Activated B cell treated with CpG ODN at 0.5 μM for 24 hours (primary cell): ENCODE measurements at regions of chr5 and their contacts with region 1.

Region 1: DNA sequence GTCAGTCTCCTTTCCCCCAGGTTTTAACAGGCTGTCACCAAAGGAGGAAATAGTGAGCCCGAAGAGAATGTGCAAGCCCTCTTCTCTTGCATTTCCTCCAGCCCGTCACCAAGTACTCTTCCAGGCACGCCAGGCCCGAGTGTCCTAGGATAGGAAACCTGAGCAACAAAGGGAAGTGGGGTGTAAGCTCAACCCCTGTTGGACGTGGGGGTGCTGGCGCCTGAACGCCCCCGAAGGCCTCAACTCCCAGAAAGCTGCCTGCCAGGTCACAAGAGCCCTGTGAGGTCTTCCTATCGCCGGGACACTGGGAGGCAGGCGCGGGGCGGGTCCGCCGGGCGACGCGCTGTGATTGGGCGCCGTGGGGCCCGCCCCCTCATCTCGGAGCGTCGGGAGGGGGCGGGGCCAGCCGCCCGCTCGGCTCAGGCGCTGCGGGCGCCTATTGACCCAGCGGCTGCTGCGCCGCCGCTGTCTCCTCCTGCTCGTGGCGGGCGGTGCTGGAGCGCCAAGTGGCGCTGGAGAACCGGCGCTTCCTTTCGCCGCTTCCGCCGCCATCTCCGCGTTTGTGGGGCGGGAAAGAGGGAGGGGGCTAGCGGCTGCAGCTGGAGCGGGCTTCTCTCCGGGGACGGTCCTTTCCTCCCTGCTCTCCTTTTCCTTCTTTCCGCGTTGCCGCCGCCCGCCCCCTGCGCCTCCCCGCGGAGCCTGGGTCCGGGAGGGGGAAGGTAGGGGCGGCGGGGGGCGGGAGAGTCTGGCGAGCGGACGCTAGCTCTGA is 572 bp upstream of the MAN2A1 start:
- DNase-seq: peak; percentile 83
- ATAC-seq: peak; percentile 82
- H3K4me3 Mint-ChIP-seq: peak overlapping the region; percentile 88
- H3K27ac Mint-ChIP-seq: peak overlapping the region; percentile 96
- H3K4me1 Mint-ChIP-seq: peaks cover 37% of the 10 kb centered on the region
- H3K27me3 Mint-ChIP-seq: peaks cover 4% of the 10 kb centered on the region
- CTCF ChIP-seq: no peak

Region 2: DNA sequence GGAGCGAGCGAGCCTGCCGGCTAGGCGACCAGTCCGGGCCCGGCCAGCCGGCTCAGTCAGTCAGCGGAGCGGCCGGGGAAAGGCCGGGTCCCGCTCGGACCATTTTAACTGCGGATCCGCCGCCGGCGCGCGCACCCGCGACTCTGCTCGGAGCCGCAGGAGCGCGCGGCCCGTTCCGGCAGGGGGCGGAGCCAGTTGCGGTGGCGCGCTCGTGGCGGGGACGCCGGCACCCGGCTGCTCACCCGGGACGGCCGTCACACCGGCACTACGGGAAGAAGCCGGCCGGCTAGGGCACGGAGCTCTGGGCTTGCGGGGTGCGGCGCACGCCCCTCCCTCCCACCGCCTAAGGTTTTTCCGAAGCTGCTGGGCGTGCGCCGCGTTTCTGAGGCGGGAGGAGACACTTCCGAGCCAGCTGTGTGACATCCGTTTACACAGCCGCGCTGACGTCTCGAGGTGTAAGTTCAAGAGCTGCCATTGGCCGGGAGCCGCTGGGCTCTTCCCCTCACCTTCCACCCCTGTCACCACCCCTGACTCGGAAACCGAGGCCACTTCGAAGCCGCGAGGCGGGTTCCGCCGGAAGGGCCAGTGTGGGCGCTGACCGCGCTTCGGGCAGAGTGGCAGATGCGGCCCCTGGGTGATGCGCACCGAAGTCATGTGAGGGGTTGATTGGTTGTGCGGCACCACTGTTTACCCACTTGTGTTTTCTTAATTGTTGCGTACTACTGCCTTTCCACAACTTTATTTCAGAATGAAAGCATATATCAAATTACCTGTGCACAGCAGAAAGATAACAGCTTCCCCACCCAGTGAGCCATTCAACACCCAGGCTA is 1307.0 kb before region 1 on chr5 and contains the start of gene FBXL17:
- CTCF ChIA-PET with region 1: interaction called, 3 read pairs
- POLR2A ChIA-PET with region 1: interaction called, 16 read pairs
- intact Hi-C with region 1: loop called (anchors 1 kb)
- DNase-seq: peak; percentile 88
- ATAC-seq: peak; percentile 71
- H3K4me3 Mint-ChIP-seq: peak within 1 kb of the TSS; percentile 96
- H3K27ac Mint-ChIP-seq: peak within 1 kb of the TSS; percentile 98
- H3K4me1 Mint-ChIP-seq: peaks cover 47% of the 10 kb centered on the region
- H3K27me3 Mint-ChIP-seq: no peaks in the 10 kb centered on the region
- CTCF ChIP-seq: no peak
- total RNA-seq, gene FBXL17: 25.8 and 26.9 TPM in 2 replicates

Region 3: GRCh38 chr5:108727651-108728565 is 961.2 kb before region 1 on chr5:
- CTCF ChIA-PET with region 1: no interaction called
- POLR2A ChIA-PET with region 1: interaction called, 3 read pairs
- intact Hi-C with region 1: loop called (anchors 1 kb)
- DNase-seq: peak; percentile 62
- ATAC-seq: peak; percentile 84
- H3K4me3 Mint-ChIP-seq: peak overlapping the region; percentile 85
- H3K27ac Mint-ChIP-seq: peak overlapping the region; percentile 96
- H3K4me1 Mint-ChIP-seq: peaks cover 50% of the 10 kb centered on the region
- H3K27me3 Mint-ChIP-seq: no peaks in the 10 kb centered on the region
- CTCF ChIP-seq: no peak

Region 4: GRCh38 chr5:109161914-109162683 is 527.1 kb before region 1 on chr5:
- CTCF ChIA-PET with region 1: no interaction called
- POLR2A ChIA-PET with region 1: no interaction called
- intact Hi-C with region 1: loop called (anchors 2 kb)
- DNase-seq: no peak
- ATAC-seq: no peak
- H3K4me3 Mint-ChIP-seq: no peak overlapping the region
- H3K27ac Mint-ChIP-seq: peak overlapping the region; percentile 51
- H3K4me1 Mint-ChIP-seq: peaks cover 31% of the 10 kb centered on the region
- H3K27me3 Mint-ChIP-seq: no peaks in the 10 kb centered on the region
- CTCF ChIP-seq: no peak

Region 5: GRCh38 chr5:109719978-109720377 is 30.8 kb after region 1 on chr5:
- CTCF ChIA-PET with region 1: interaction called, 8 read pairs
- POLR2A ChIA-PET with region 1: no interaction called
- intact Hi-C with region 1: loop called (anchors 1 kb)
- DNase-seq: no peak
- ATAC-seq: no peak
- H3K4me3 Mint-ChIP-seq: no peak overlapping the region
- H3K27ac Mint-ChIP-seq: no peak overlapping the region
- H3K4me1 Mint-ChIP-seq: peaks cover 6% of the 10 kb centered on the region
- H3K27me3 Mint-ChIP-seq: no peaks in the 10 kb centered on the region
- CTCF ChIP-seq: no peak

Region 6: GRCh38 chr5:110371725-110372041 is 682.5 kb after region 1 on chr5:
- CTCF ChIA-PET with region 1: no interaction called
- POLR2A ChIA-PET with region 1: no interaction called
- intact Hi-C with region 1: loop called (anchors 2 kb)
- DNase-seq: no peak
- ATAC-seq: peak; percentile 87
- H3K4me3 Mint-ChIP-seq: peak overlapping the region; percentile 55
- H3K27ac Mint-ChIP-seq: peak overlapping the region; percentile 20
- H3K4me1 Mint-ChIP-seq: peaks cover 22% of the 10 kb centered on the region
- H3K27me3 Mint-ChIP-seq: no peaks in the 10 kb centered on the region
- CTCF ChIP-seq: no peak

Region 7: DNA sequence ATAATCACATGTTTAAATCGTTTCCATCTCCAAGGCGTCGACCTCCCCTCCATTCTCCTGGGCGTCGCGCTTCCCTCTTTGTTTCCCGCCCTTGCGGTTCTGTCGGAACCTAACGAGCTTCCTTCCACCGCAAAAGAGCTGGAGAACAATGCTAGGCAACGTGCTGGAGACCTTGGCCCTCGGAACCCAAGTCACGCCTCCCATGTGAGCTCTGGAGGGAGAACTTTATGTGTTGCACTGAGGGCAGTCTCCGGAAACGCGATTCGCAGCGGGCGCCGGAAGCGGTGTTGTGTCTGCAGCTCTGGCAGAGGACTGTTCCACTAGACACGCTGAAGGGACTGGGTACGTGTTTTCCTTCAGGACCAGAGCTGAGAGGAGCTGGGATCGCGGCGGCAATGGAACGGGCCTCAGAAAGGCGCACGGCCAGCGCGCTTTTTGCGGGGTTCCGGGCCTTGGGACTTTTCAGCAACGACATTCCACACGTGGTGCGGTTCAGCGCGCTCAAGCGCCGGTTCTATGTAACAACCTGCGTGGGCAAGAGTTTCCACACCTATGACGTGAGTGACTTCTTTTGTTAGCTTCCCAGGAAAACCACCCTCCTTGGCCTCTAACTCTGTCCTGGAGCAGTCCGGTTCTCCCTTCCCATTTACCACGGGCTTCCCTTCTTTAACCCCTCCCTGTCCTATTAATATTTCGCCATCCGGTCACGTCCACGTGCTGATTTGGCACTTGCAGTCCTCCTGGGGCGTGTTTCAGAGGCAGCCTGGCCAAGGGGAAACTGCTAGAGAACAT is 1403.1 kb after region 1 on chr5 and contains the start of gene WDR36:
- CTCF ChIA-PET with region 1: no interaction called
- POLR2A ChIA-PET with region 1: no interaction called
- intact Hi-C with region 1: loop called (anchors 2 kb)
- DNase-seq: peak; percentile 88
- ATAC-seq: peak; percentile 95
- H3K4me3 Mint-ChIP-seq: peak within 1 kb of the TSS; percentile 96
- H3K27ac Mint-ChIP-seq: peak within 1 kb of the TSS; percentile 90
- H3K4me1 Mint-ChIP-seq: peaks cover 31% of the 10 kb centered on the region
- H3K27me3 Mint-ChIP-seq: peaks cover 6% of the 10 kb centered on the region
- CTCF ChIP-seq: no peak
- total RNA-seq, gene WDR36: 42.6 and 48.6 TPM in 2 replicates